ENCODE measurements at regions of chr1 and their contacts with region 1.

Region 1: GRCh38 chr1:47785561-47786271 is 211.5 kb downstream of the TRABD2B start:
- DNase-seq: peak in 1 of 2 donors; percentile 74
- H3K4me3 ChIP-seq: no peak overlapping the region
- H3K27ac ChIP-seq: peak overlapping the region; percentile 44 to 46
- H3K4me1 ChIP-seq: peaks cover 7 to 34% of the 10 kb centered on the region in 2 donors
- H3K27me3 ChIP-seq: no peaks in the 10 kb centered on the region
- CTCF ChIP-seq: peak; percentile 46 to 65 (median 63)

Region 2: GRCh38 chr1:47663286-47663685 is 122.4 kb before region 1 on chr1:
- intact Hi-C with region 1: no loop called
- DNase-seq: peak in 1 of 2 donors; percentile 34
- H3K4me3 ChIP-seq: no peak overlapping the region
- H3K27ac ChIP-seq: no peak overlapping the region
- H3K4me1 ChIP-seq: peaks cover 0 to 9% of the 10 kb centered on the region in 2 donors
- H3K27me3 ChIP-seq: no peaks in the 10 kb centered on the region
- CTCF ChIP-seq: no peak

Region 3: GRCh38 chr1:47710329-47711071 is 75.2 kb before region 1 on chr1:
- intact Hi-C with region 1: no loop called
- DNase-seq: peak in 1 of 2 donors; percentile 88
- H3K4me3 ChIP-seq: peak overlapping the region; percentile 40 to 65
- H3K27ac ChIP-seq: no peak overlapping the region
- H3K4me1 ChIP-seq: peaks cover 12 to 13% of the 10 kb centered on the region in 2 donors
- H3K27me3 ChIP-seq: no peaks in the 10 kb centered on the region
- CTCF ChIP-seq: peak; percentile 96 to 100 (median 99)

Region 4: DNA sequence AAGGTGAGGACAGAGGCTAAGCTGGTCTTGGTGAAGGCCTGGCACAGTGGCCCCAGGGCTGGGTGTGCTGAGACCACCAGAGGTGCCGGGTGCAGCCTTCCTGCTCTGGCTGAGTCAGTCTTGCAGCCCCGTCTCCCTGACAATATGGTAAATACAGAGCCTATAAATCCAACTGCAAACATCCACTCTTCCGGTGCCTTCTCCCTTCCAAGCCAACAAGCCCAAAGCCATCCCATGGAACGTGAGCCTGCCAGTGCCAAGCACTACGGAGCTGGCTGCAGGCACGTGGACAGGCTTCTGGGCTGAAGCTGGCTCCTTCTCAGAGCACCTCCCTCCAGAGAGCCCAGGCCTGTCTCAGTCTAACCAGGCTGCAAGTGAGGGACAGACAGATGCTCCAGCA is 141.4 kb after region 1 on chr1:
- intact Hi-C with region 1: loop called (anchors 5 kb)
- DNase-seq: no peak
- H3K4me3 ChIP-seq: no peak overlapping the region
- H3K27ac ChIP-seq: peak overlapping the region in 1 of 2 donors; percentile 14
- H3K4me1 ChIP-seq: peaks cover 0 to 18% of the 10 kb centered on the region in 2 donors
- H3K27me3 ChIP-seq: no peaks in the 10 kb centered on the region
- CTCF ChIP-seq: no peak

Region 5: GRCh38 chr1:48026275-48026674 is 240.6 kb after region 1 on chr1:
- intact Hi-C with region 1: no loop called
- DNase-seq: peak in 1 of 2 donors; percentile 39
- H3K4me3 ChIP-seq: no peak overlapping the region
- H3K27ac ChIP-seq: no peak overlapping the region
- H3K4me1 ChIP-seq: no peaks in the 10 kb centered on the region
- H3K27me3 ChIP-seq: no peaks in the 10 kb centered on the region
- CTCF ChIP-seq: no peak

Measured in ascending aorta (tissue), 2 donors.